ENCODE measurements at regions of chr1 and their contacts with region 1.

Region 1: DNA sequence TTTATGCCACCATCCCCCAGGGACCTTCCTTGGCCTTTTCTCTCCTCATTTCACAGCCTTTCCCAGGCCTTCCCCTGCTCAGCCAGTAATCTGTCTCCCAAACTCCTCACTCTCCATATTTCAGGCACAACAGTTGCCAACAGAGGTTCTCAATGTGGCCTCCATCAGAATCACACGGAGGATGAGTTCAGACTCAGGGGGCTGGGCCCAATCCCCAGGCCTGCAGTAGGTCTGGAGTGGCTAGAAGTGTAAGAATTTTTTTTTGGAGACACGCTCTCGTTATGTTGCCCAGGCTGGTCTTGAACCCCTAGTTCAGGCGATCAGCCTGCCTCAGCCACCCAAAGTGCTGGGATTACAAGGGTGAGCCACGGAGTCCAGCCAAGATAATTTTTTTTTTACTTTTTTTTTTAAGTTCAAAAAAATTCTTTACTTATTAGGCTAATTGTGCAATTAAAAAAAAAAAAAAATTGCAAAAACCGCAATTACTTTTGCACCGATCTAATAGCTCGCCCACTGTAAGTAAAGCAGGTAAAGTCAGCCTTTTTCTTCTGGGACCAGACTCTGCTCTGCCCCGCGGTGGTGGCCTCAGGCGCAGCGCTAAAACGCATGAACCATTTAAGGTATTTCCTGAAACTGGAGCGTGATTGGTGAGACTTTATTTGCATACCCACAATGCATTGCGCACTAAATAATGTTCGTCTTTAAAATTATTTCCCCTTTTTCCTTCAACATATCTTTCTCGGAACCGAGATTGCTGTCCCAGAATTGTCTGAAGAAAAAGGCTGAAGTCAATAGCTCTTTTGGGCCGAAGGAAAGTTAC is 18.7 kb downstream of the KIAA2013 start:
- DNase-seq: peak; percentile 95
- ATAC-seq: peak; percentile 57
- H3K4me3 Mint-ChIP-seq: peak overlapping the region; percentile 81
- H3K27ac Mint-ChIP-seq: peak overlapping the region; percentile 99
- H3K4me1 Mint-ChIP-seq: peaks cover 37% of the 10 kb centered on the region
- H3K27me3 Mint-ChIP-seq: peaks cover 12% of the 10 kb centered on the region

Region 2: GRCh38 chr1:11012250-11013171 is 895.0 kb before region 1 on chr1 and contains the start of gene TARDBP:
- CTCF ChIA-PET with region 1: no interaction called
- POLR2A ChIA-PET with region 1: no interaction called
- intact Hi-C with region 1: loop called in 1 of 2 experiments (anchors 2 kb)
- DNase-seq: peak; percentile 94
- ATAC-seq: peak; percentile 89
- H3K4me3 Mint-ChIP-seq: peak within 1 kb of the TSS; percentile 93
- H3K27ac Mint-ChIP-seq: peak within 1 kb of the TSS; percentile 99
- H3K4me1 Mint-ChIP-seq: peaks cover 30% of the 10 kb centered on the region
- H3K27me3 Mint-ChIP-seq: no peaks in the 10 kb centered on the region
- total RNA-seq, gene TARDBP: 180 to 190 TPM

Region 3: GRCh38 chr1:11681071-11681771 is 226.3 kb before region 1 on chr1 and contains the start of gene MAD2L2:
- CTCF ChIA-PET with region 1: no interaction called
- POLR2A ChIA-PET with region 1: interaction called, 10 read pairs
- intact Hi-C with region 1: loop called in 1 of 2 experiments (anchors 1 kb)
- DNase-seq: peak; percentile 96
- ATAC-seq: peak; percentile 85
- H3K4me3 Mint-ChIP-seq: peak within 1 kb of the TSS; percentile 83
- H3K27ac Mint-ChIP-seq: peak within 1 kb of the TSS; percentile 88
- H3K4me1 Mint-ChIP-seq: peaks cover 9% of the 10 kb centered on the region
- H3K27me3 Mint-ChIP-seq: no peaks in the 10 kb centered on the region
- total RNA-seq, gene MAD2L2: 70.4 to 71.5 TPM

Region 4: DNA sequence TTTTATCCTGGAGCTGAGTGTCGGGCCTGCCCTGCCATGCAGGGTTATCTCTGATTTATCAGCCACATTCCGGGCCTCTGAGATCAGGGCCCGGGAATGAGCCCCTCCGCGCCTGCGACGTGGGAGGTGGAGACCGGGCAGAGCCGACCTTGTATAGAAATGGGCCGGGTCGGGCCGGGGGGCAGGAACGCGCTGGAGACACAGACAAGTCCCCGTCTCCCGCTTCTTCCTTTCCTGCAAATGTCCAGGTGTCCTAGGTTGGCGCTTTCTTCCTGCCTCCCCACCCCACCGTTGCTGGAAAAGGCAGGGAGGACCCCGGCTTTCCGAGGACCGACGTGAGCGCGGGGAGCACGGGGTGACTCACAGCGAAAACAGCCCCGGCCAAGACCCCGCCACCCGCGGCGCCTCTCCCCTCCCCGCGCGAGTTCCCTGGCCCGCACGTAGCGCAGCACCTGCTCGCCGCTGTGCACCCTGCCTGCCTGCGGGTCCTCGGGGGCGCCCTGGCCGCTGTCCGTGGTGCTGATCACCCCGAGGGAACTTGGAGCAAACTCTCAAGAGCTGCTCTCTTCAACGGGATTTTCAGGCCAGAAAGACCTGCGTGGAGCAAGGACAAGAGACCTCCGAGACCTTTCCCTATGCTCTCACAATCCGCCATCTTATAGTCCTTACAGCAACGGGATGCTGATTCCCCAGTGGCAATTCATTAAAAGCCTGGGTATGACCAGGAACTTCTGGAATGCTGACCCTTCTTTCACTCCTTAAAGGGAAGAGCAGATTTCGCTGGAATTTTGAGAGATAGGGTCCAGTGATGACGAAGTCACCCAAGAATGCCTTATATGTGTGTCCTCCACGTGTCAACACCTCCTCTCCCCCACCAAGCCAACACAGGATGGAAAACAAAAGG is 48.3 kb before region 1 on chr1:
- CTCF ChIA-PET with region 1: no interaction called
- POLR2A ChIA-PET with region 1: interaction called, 11 read pairs
- intact Hi-C with region 1: no loop called
- DNase-seq: peak; percentile 82
- ATAC-seq: peak; percentile 60
- H3K4me3 Mint-ChIP-seq: no peak overlapping the region
- H3K27ac Mint-ChIP-seq: no peak overlapping the region
- H3K4me1 Mint-ChIP-seq: no peaks in the 10 kb centered on the region
- H3K27me3 Mint-ChIP-seq: peaks cover 46% of the 10 kb centered on the region

Region 5: DNA sequence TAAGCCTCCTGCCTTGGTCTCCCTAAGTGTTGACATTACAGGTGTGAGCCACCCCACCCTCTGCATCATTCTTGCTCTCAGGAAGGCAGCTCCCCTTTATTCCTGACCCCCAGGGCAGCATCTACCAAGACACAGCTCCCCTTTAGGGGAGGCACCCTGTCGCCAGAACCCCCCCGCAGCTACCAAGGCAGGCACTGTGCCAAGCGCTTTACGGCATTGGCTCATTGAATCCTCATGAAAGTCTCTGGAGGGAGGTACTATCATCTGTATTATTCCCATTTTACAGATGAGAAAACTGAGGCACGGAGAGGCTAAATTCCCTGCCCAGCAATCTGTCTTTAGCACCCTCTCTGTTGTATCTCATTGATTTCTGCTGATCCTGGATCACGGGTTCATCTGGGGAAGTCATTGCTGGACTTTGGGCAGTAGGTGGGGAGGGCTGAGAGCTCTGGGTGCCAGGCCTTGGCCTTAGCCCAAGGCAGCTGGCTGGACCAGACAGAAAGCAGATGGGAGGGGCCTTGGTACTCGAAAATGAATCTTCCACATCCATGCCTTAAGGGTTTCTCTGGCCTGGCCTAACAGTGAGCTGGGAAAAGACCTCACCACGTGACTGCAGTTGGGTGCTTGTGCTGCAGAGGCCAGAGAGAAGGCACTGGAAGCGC is 32.9 kb after region 1 on chr1:
- CTCF ChIA-PET with region 1: no interaction called
- POLR2A ChIA-PET with region 1: interaction called, 27 read pairs
- intact Hi-C with region 1: loop called in 1 of 2 experiments (anchors 2 kb)
- DNase-seq: no peak
- ATAC-seq: no peak
- H3K4me3 Mint-ChIP-seq: no peak overlapping the region
- H3K27ac Mint-ChIP-seq: no peak overlapping the region
- H3K4me1 Mint-ChIP-seq: no peaks in the 10 kb centered on the region
- H3K27me3 Mint-ChIP-seq: no peaks in the 10 kb centered on the region

Region 6: DNA sequence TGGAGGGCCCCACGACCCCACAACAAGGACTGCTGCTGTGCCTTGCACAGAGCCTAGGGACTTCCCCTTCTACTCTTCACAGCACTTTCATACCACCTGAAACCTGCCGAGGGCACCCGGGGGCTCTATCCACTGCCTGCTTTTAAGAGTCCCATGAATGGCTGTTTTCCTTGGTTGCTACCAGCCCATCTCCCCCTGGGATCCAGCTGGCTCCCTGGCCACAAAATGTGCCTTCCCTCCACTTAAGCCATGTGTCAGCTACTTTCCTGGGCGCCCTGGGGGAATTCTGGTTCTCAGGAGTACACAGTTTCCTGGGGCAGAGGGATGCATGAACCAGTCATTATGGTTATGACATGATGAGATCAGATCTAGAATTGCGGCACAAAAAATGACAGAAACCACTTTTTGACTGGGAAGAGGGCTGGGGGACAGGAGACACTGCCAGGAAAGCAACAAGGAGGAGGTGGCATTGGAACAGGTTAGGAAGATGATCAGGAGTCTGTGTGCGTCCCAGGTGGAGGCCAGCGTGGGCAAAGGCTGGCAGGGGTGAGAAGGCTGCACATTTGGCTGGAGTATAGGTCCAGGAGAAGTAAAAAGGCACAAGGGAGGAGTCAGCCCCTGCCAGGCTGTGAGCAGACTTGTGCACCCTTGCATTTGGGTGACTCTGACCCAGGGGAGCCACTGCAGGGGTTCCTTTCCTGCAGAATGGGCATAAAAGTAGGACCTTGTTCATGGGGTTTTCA is 152.4 kb after region 1 on chr1:
- CTCF ChIA-PET with region 1: interaction called, 3 read pairs
- POLR2A ChIA-PET with region 1: interaction called, 10 read pairs
- intact Hi-C with region 1: loop called in 1 of 2 experiments (anchors 5 kb)
- DNase-seq: peak; percentile 67
- ATAC-seq: peak; percentile 56
- H3K4me3 Mint-ChIP-seq: peak overlapping the region; percentile 3
- H3K27ac Mint-ChIP-seq: peak overlapping the region; percentile 56
- H3K4me1 Mint-ChIP-seq: peaks cover 71% of the 10 kb centered on the region
- H3K27me3 Mint-ChIP-seq: peaks cover 29% of the 10 kb centered on the region

Region 7: GRCh38 chr1:12208764-12209494 is 301.4 kb after region 1 on chr1:
- CTCF ChIA-PET with region 1: no interaction called
- POLR2A ChIA-PET with region 1: no interaction called
- intact Hi-C with region 1: no loop called
- DNase-seq: peak; percentile 93
- ATAC-seq: peak; percentile 68
- H3K4me3 Mint-ChIP-seq: no peak overlapping the region
- H3K27ac Mint-ChIP-seq: peak overlapping the region; percentile 17
- H3K4me1 Mint-ChIP-seq: peaks cover 47% of the 10 kb centered on the region
- H3K27me3 Mint-ChIP-seq: no peaks in the 10 kb centered on the region

Region 8: GRCh38 chr1:12619792-12620487 is 712.5 kb after region 1 on chr1:
- CTCF ChIA-PET with region 1: no interaction called
- POLR2A ChIA-PET with region 1: interaction called, 13 read pairs
- intact Hi-C with region 1: no loop called
- DNase-seq: peak; percentile 88
- ATAC-seq: peak; percentile 39
- H3K4me3 Mint-ChIP-seq: peak overlapping the region; percentile 95
- H3K27ac Mint-ChIP-seq: no peak overlapping the region
- H3K4me1 Mint-ChIP-seq: peaks cover 43% of the 10 kb centered on the region
- H3K27me3 Mint-ChIP-seq: no peaks in the 10 kb centered on the region